ENCODE measurements at regions of chr12 and their contacts with region 1.

Region 1: GRCh38 chr12:54398995-54399793 is 14.7 kb upstream of the ZNF385A start:
- DNase-seq: peak; percentile 82 to 93 (median 89)
- H3K4me3 ChIP-seq: no peak overlapping the region
- H3K27ac ChIP-seq: no peak overlapping the region
- H3K4me1 ChIP-seq: peaks cover 0 to 10% (median 2%) of the 10 kb centered on the region in 4 experiments
- H3K27me3 ChIP-seq: no peaks in the 10 kb centered on the region

Region 2: GRCh38 chr12:54182086-54182485 is 217.1 kb before region 1 on chr12:
- CTCF ChIA-PET with region 1: no interaction called
- POLR2A ChIA-PET with region 1: no interaction called
- DNase-seq: no peak
- H3K4me3 ChIP-seq: no peak overlapping the region
- H3K27ac ChIP-seq: no peak overlapping the region
- H3K4me1 ChIP-seq: no peaks in the 10 kb centered on the region
- H3K27me3 ChIP-seq: peaks cover 0 to 13% (median 2%) of the 10 kb centered on the region in 5 experiments

Region 3: DNA sequence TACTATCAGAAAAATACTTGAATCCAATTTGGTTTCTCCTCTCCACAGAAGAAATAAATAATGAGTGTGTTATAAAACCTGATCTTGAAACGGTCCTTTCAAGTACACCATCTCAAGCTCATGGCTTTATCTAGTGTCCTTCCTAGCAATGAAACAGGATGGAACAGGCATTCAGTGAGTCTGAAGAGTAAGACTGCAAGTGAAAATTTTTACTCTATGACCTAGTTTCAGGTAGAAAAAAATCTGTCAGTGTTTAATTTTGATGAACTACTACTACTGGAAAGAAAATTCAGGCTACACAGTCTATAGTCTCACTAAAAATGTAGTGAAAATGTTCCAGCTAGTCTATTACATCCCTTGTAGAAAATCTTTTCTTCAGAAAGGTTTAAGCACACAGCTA is 127.0 kb before region 1 on chr12:
- CTCF ChIA-PET with region 1: no interaction called
- POLR2A ChIA-PET with region 1: no interaction called
- DNase-seq: no peak
- H3K4me3 ChIP-seq: no peak overlapping the region
- H3K27ac ChIP-seq: no peak overlapping the region
- H3K4me1 ChIP-seq: peaks cover 0 to 12% (median 5%) of the 10 kb centered on the region in 4 experiments
- H3K27me3 ChIP-seq: no peaks in the 10 kb centered on the region

Region 4: DNA sequence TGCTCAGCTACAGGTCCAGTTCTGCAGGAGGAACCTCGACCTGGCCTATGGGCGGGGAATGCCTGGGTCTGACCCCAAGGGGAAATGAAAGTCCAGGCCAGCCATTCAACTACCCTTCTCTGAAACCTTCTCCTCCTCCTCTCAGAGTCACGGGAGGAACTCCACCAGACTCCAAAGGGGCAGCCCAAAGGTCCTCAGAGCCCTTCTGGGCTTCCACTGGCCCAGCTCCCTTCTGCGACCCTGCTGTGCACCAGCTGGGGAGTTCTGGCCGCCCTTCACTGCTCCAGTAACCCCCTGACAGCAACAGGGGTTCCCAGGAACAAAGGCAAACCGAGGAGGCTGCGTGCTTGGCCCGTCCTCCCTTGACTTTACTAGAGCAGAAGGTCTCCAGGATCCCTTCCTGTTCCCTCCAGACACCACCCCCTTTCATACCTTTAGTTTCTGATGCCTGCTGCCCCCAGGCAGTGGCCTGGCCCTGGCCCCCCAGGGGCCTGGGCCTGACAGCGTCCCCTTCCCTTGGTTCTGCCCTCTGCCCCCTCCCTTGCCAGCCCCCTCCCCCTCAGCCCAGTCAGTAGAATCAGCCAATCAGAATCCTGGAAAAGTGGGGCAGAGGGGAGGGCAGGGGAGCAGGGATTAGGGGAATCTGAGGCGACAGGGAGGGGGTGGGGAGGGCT is 13.8 kb before region 1 on chr12:
- CTCF ChIA-PET with region 1: interaction called, 40 read pairs
- POLR2A ChIA-PET with region 1: interaction called, 3 read pairs
- DNase-seq: no peak
- H3K4me3 ChIP-seq: peak overlapping the region in 1 of 7 experiments; percentile 39
- H3K27ac ChIP-seq: no peak overlapping the region
- H3K4me1 ChIP-seq: peaks cover 0 to 75% (median 40%) of the 10 kb centered on the region in 4 experiments
- H3K27me3 ChIP-seq: no peaks in the 10 kb centered on the region

Region 5: GRCh38 chr12:54411391-54412241 is 12.4 kb after region 1 on chr12:
- CTCF ChIA-PET with region 1: interaction called, 319 read pairs
- POLR2A ChIA-PET with region 1: interaction called, 17 read pairs
- DNase-seq: peak in 2 of 3 donors; percentile 52 to 59
- H3K4me3 ChIP-seq: peak overlapping the region in 5 of 7 experiments; percentile 27 to 77 (median 58)
- H3K27ac ChIP-seq: peak overlapping the region; percentile 93 to 97
- H3K4me1 ChIP-seq: peaks cover 20 to 90% (median 68%) of the 10 kb centered on the region in 4 experiments
- H3K27me3 ChIP-seq: no peaks in the 10 kb centered on the region

Region 6: DNA sequence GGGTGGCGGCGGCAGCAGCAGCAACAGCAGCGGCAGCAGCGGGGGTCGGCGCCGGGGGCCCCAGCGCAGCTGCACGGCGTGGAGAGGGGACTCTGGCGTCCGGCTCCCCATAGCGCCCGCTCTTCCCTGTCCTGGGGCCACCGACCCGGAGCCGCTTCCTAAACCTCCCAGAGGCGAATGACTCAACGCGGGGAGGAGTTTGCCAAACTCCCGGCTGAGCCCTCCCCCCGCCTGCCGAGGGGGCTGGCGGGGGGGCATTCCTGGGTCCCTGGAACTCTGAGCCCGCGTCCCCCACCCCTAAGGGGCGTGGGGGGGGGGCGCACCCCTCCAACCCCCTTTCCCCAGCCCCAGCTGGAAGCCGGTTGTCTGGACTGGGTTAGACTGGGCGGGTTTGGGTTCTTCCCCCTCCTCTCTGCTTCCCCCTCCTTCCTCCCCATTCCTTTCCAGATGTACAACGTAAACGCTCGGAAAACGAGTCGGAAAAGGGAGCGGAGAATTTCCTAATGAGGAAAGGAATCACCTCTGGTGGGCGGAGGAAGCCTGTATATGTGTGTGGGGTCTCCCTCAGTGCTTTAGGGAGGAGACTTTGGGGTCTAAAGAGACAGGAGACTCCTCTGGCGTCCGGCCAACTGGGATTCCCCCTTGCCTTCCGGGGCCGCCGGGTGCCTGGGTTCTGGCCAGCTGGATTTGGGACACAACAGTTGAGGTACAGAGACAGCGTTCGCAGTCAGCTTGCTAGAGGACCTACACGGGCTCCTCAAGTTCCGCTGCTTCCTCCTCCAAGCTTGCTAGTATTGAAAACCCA is 20.1 kb after region 1 on chr12 and contains the start of gene ITGA5:
- CTCF ChIA-PET with region 1: interaction called, 630 read pairs
- POLR2A ChIA-PET with region 1: interaction called, 17 read pairs
- DNase-seq: peak in 1 of 3 donors; percentile 38
- H3K4me3 ChIP-seq: peak within 1 kb of the TSS; percentile 69 to 98 (median 90)
- H3K27ac ChIP-seq: peak within 1 kb of the TSS; percentile 86 to 97
- H3K4me1 ChIP-seq: peaks cover 18 to 77% (median 62%) of the 10 kb centered on the region in 4 experiments
- H3K27me3 ChIP-seq: no peaks in the 10 kb centered on the region

Region 7: DNA sequence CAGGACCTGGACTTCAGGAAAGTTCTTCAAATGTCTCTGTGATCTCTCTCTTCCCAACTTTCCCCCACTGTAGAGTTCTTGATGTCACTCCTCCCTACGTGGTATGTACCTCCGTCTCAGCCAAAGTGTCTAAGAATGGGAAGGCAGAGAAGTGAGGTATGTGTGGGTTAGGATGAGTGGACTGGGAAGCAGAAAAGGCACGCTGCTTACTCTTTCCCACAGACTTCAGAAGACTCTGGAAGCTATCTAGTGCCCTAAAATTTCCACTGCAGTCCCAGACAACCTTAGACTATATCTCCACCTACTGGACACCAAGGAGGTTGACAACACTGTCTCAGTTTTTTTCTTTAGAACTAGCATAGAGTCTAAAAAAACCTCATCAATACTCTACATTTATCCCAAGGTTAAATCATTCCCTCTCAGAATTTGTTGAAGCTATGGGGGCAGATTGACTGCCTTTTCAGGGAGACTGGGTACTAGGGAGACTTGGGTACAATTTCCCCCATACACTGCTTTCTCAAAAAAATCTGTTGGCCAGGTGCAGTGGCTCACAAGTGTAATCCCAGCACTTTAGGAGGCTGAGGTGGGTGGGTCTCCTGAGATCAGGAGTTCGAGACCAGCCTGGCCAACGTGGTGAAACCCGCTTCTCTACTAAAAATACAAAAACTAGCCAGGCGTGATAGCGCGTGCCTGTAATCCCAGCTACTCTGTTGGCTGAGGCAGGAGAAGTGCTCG is 40.5 kb after region 1 on chr12:
- CTCF ChIA-PET with region 1: interaction called, 630 read pairs
- POLR2A ChIA-PET with region 1: interaction called, 26 read pairs
- DNase-seq: peak; percentile 62 to 72 (median 66)
- H3K4me3 ChIP-seq: no peak overlapping the region
- H3K27ac ChIP-seq: no peak overlapping the region
- H3K4me1 ChIP-seq: peaks cover 0 to 13% (median 6%) of the 10 kb centered on the region in 4 experiments
- H3K27me3 ChIP-seq: no peaks in the 10 kb centered on the region

Region 8: DNA sequence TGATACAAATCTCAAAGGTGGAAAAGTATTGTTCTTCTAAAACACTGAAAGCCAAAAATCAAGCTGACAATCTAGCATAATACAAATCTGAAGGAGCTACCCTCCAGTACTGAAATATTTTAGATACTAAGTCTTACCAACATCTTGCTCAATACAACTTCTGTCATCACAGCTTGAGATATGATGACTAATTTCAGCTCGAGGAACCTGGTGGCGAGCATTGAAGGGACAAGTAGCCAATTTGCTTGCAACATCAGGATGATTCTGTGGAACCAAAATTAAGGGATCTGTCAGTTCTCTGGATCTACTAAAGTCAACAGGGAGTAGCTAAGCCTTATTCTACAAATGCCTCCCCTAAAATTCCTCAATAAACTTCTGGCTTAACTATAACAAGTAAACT is 63.8 kb after region 1 on chr12:
- CTCF ChIA-PET with region 1: interaction called, 10 read pairs
- POLR2A ChIA-PET with region 1: no interaction called
- DNase-seq: peak in 2 of 3 donors; percentile 52 to 60
- H3K4me3 ChIP-seq: no peak overlapping the region
- H3K27ac ChIP-seq: no peak overlapping the region
- H3K4me1 ChIP-seq: no peaks in the 10 kb centered on the region
- H3K27me3 ChIP-seq: no peaks in the 10 kb centered on the region

Region 9: DNA sequence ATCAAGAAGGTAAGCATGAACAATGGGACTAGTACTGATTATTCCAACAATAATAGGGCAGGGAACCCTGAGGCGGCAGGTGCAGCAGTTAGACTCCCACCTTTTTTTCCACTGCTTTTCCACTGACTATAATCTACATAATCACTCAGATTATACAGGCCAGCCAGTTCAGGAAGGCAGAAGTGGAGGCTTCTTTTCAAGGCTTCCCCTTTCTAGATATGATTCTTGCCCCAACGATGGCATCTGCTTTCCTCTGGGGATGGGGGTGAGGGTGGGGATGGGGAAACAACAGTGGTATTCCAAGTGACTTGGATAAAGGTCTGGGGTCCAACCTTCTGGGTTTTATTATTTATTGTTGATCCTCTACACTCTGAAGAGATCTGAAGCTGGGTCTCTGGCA is 98.7 kb after region 1 on chr12:
- CTCF ChIA-PET with region 1: interaction called, 17 read pairs
- POLR2A ChIA-PET with region 1: no interaction called
- DNase-seq: no peak
- H3K4me3 ChIP-seq: peak overlapping the region; percentile 19 to 98 (median 90)
- H3K27ac ChIP-seq: peak overlapping the region; percentile 76 to 82
- H3K4me1 ChIP-seq: peaks cover 18 to 36% (median 28%) of the 10 kb centered on the region in 4 experiments
- H3K27me3 ChIP-seq: no peaks in the 10 kb centered on the region

Region 10: DNA sequence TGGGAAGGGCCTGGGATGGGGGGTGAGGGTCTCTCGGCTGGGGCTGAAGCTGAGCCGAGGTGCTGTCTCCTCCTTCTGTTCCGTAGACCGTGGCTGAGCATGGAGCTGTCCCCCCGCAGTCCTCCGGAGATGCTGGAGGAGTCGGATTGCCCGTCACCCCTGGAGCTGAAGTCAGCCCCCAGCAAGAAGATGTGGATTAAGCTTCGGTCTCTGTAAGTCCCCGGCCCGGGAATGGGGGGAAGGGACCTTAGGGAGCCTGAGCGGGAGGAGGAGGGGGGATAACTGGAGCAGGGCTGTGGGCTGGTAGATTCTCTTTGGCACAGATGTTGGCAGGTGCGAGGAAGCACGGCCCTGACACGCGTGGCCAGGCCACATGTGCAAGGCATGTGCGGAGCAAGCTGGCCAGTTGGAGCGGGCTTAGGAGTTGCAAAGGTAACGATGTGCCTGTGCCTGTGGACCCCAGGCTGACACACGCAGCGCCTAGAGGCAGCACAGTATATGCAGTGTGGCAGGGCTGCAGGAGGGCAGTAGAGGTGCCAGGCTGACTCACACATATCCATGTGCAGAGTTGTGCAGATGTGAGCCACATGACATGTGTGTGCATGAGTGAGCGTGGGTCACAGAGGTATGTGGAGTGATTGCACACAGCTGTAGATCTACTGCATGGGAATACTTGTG is 150.7 kb after region 1 on chr12:
- CTCF ChIA-PET with region 1: no interaction called
- POLR2A ChIA-PET with region 1: no interaction called
- DNase-seq: peak; percentile 24 to 86 (median 76)
- H3K4me3 ChIP-seq: peak overlapping the region in 6 of 7 experiments; percentile 34 to 81 (median 63)
- H3K27ac ChIP-seq: no peak overlapping the region
- H3K4me1 ChIP-seq: peaks cover 0 to 17% (median 15%) of the 10 kb centered on the region in 4 experiments
- H3K27me3 ChIP-seq: peaks cover 0 to 3% (median 0%) of the 10 kb centered on the region in 5 experiments

Measured in common myeloid progenitor, CD34-positive (primary cell).